CD4-positive, alpha-beta memory T cell (primary cell): ENCODE measurements at regions of chr3 and their contacts with region 1.

Region 1: GRCh38 chr3:16842272-16843270 is 42.2 kb upstream of the PLCL2 start:
- DNase-seq: peak; percentile 79 to 91 (median 81)
- H3K4me3 ChIP-seq: peak overlapping the region; percentile 36 to 54
- H3K4me3 Mint-ChIP-seq: peak overlapping the region; percentile 82 to 91 (median 87)
- H3K27ac ChIP-seq: peak overlapping the region; percentile 80
- H3K27ac Mint-ChIP-seq: peak overlapping the region; percentile 92 to 99 (median 98)
- H3K4me1 ChIP-seq: peaks cover 86% of the 10 kb centered on the region
- H3K4me1 Mint-ChIP-seq: peaks cover 54 to 90% (median 78%) of the 10 kb centered on the region in 4 donors
- H3K27me3 ChIP-seq: no peaks in the 10 kb centered on the region
- H3K27me3 Mint-ChIP-seq: no peaks in the 10 kb centered on the region

Region 2: DNA sequence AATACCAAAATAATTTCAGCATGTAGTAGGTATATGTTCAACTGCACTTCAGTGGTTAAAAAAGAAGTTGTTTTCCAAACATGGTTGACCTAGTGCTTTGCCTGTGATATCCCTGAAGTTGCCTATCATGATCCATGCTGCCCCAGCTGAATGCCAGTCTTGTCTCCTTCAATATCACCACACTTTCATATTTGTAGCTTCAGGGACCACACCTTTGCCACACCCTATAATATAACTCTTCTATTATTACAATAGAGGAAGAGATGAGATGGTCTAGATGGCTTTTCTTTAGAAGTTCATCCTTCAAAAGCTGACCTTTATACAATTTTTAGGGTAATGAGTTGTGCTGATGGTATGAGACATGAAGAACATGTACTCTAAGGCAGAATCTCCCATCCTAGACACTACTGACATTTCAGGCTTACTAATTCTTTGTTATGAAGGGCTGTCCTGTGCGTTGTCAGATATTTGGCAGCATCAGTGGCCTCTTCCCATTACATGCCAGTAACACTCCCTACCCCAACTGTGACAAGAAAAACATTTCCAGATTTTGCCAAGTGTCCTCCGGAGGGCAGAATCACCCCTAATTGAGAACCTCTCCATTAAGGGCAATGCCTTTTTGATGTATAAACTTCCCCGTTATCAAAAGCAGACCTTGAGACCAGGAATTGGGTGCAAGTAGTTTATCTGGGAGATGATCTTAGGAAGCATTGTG is 34.0 kb before region 1 on chr3:
- CTCF ChIA-PET with region 1: interaction called, 7 read pairs
- POLR2A ChIA-PET with region 1: interaction called, 11 read pairs
- intact Hi-C with region 1: no loop called
- DNase-seq: no peak
- H3K4me3 ChIP-seq: no peak overlapping the region
- H3K4me3 Mint-ChIP-seq: no peak overlapping the region
- H3K27ac ChIP-seq: no peak overlapping the region
- H3K27ac Mint-ChIP-seq: peak overlapping the region in 1 of 7 donors; percentile 35
- H3K4me1 ChIP-seq: peaks cover 16% of the 10 kb centered on the region
- H3K4me1 Mint-ChIP-seq: peaks cover 19 to 35% (median 26%) of the 10 kb centered on the region in 4 donors
- H3K27me3 ChIP-seq: no peaks in the 10 kb centered on the region
- H3K27me3 Mint-ChIP-seq: peaks cover 0 to 2% of the 10 kb centered on the region in 2 donors

Region 3: GRCh38 chr3:16828815-16829214 is 13.8 kb before region 1 on chr3:
- CTCF ChIA-PET with region 1: interaction called, 18 read pairs
- POLR2A ChIA-PET with region 1: interaction called, 17 read pairs
- intact Hi-C with region 1: loop called (anchors 2 kb)
- DNase-seq: peak; percentile 56 to 71 (median 59)
- H3K4me3 ChIP-seq: no peak overlapping the region
- H3K4me3 Mint-ChIP-seq: no peak overlapping the region
- H3K27ac ChIP-seq: no peak overlapping the region
- H3K27ac Mint-ChIP-seq: peak overlapping the region in 2 of 7 donors; percentile 20 to 32
- H3K4me1 ChIP-seq: peaks cover 14% of the 10 kb centered on the region
- H3K4me1 Mint-ChIP-seq: peaks cover 18 to 28% (median 26%) of the 10 kb centered on the region in 4 donors
- H3K27me3 ChIP-seq: no peaks in the 10 kb centered on the region
- H3K27me3 Mint-ChIP-seq: no peaks in the 10 kb centered on the region

Region 4: GRCh38 chr3:16897254-16897926 is 54.8 kb after region 1 on chr3:
- CTCF ChIA-PET with region 1: interaction called, 6 read pairs
- POLR2A ChIA-PET with region 1: interaction called, 33 read pairs
- intact Hi-C with region 1: loop called (anchors 5 kb)
- DNase-seq: peak in 2 of 5 donors; percentile 20 to 45
- H3K4me3 ChIP-seq: no peak overlapping the region
- H3K4me3 Mint-ChIP-seq: peak overlapping the region in 7 of 8 donors; percentile 29 to 86 (median 59)
- H3K27ac ChIP-seq: no peak overlapping the region
- H3K27ac Mint-ChIP-seq: peak overlapping the region; percentile 32 to 88 (median 66)
- H3K4me1 ChIP-seq: peaks cover 94% of the 10 kb centered on the region
- H3K4me1 Mint-ChIP-seq: peaks cover 78 to 90% (median 85%) of the 10 kb centered on the region in 4 donors
- H3K27me3 ChIP-seq: no peaks in the 10 kb centered on the region
- H3K27me3 Mint-ChIP-seq: no peaks in the 10 kb centered on the region

Region 5: GRCh38 chr3:16906682-16907081 is 64.1 kb after region 1 on chr3:
- CTCF ChIA-PET with region 1: interaction called, 6 read pairs
- POLR2A ChIA-PET with region 1: interaction called, 33 read pairs
- intact Hi-C with region 1: loop called (anchors 5 kb)
- DNase-seq: peak in 2 of 5 donors; percentile 40 to 60
- H3K4me3 ChIP-seq: no peak overlapping the region
- H3K4me3 Mint-ChIP-seq: peak overlapping the region in 7 of 8 donors; percentile 25 to 80 (median 62)
- H3K27ac ChIP-seq: no peak overlapping the region
- H3K27ac Mint-ChIP-seq: peak overlapping the region in 6 of 7 donors; percentile 42 to 85 (median 52)
- H3K4me1 ChIP-seq: peaks cover 93% of the 10 kb centered on the region
- H3K4me1 Mint-ChIP-seq: peaks cover 66 to 90% (median 76%) of the 10 kb centered on the region in 4 donors
- H3K27me3 ChIP-seq: no peaks in the 10 kb centered on the region
- H3K27me3 Mint-ChIP-seq: no peaks in the 10 kb centered on the region

Region 6: DNA sequence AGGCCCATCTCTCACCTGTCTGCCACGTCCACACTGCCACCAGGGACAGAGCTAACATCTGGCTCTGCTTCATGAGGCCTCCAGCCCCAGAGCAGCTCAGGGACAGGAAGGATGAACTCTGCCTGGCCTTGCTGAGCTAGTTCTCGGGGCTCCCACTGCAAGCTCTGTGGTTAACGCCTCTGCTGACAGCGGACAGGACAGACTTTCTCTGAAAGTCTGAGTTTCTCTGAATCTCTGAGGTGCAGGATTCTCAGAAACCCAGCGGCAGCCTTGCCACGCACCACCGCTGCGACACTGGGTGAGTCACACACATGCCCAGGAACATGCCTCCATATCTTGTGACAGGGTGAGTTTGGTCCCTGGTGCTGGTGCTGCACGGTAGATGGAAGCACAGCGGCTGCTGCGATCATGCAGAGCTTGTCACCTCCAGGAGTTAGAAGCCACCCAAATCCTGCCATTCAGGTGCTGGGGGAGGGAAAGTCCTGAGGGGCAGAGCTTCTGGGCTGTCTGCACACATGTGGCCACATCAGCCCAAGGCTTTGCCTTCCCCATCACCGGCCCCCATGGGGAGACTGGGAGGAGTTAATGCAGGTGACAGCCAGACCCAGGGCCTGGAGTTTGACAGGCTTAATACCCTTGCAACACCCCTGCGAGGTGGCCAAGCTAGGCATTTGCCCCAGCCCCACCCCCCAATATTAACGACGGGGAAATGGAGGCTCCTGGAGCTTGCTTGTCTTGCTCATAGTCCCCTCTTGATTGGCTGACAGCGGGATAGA is 309.2 kb after region 1 on chr3:
- CTCF ChIA-PET with region 1: interaction called, 5 read pairs
- POLR2A ChIA-PET with region 1: interaction called, 15 read pairs
- intact Hi-C with region 1: loop called (anchors 5 kb)
- DNase-seq: peak; percentile 76 to 90 (median 82)
- H3K4me3 ChIP-seq: peak overlapping the region; percentile 11 to 30
- H3K4me3 Mint-ChIP-seq: peak overlapping the region; percentile 29 to 71 (median 68)
- H3K27ac ChIP-seq: peak overlapping the region; percentile 55
- H3K27ac Mint-ChIP-seq: peak overlapping the region; percentile 83 to 92 (median 91)
- H3K4me1 ChIP-seq: peaks cover 33% of the 10 kb centered on the region
- H3K4me1 Mint-ChIP-seq: peaks cover 26 to 57% (median 34%) of the 10 kb centered on the region in 4 donors
- H3K27me3 ChIP-seq: no peaks in the 10 kb centered on the region
- H3K27me3 Mint-ChIP-seq: no peaks in the 10 kb centered on the region